ENCODE measurements at regions of chr5 and their contacts with region 1.

Region 1: DNA sequence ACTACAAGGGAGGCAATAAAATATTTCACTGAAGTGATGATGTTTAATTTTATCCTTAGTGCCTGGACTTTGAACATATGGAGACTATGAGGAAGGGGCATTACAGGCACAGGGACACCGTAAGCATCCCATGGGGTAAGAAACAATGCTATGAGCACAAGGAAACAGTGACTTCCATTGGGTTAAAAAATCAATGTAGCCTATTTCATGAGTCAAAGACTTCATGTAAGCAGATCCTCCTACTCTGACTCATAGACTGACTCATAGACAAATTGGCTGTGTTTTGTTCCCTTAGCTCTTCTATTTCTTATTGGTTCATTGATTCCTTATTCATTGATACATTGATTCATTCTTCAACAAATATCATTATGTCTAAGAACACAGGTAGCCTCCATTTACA is 351.0 kb downstream of the PRELID2 start:
- DNase-seq: peak; percentile 92
- ATAC-seq: peak; percentile 74
- H3K4me3 ChIP-seq: no peak overlapping the region
- H3K27ac ChIP-seq: no peak overlapping the region
- H3K4me1 ChIP-seq: peaks cover 8% of the 10 kb centered on the region
- H3K27me3 ChIP-seq: no peaks in the 10 kb centered on the region
- CTCF ChIP-seq: no peak
- POLR2A ChIP-seq: no peak
- RAD21 ChIP-seq: no peak

Region 2: GRCh38 chr5:145362261-145362660 is 121.9 kb before region 1 on chr5:
- CTCF ChIA-PET with region 1: no interaction called
- POLR2A ChIA-PET with region 1: no interaction called
- dilution Hi-C with region 1: no loop called
- in situ Hi-C with region 1: no loop called
- intact Hi-C with region 1: loop called (anchors 5 kb)
- DNase-seq: peak; percentile 93
- ATAC-seq: peak; percentile 84
- H3K4me3 ChIP-seq: no peak overlapping the region
- H3K27ac ChIP-seq: peak overlapping the region; percentile 99
- H3K4me1 ChIP-seq: peaks cover 14% of the 10 kb centered on the region
- H3K27me3 ChIP-seq: no peaks in the 10 kb centered on the region
- CTCF ChIP-seq: no peak
- POLR2A ChIP-seq: no peak
- RAD21 ChIP-seq: no peak

Region 3: DNA sequence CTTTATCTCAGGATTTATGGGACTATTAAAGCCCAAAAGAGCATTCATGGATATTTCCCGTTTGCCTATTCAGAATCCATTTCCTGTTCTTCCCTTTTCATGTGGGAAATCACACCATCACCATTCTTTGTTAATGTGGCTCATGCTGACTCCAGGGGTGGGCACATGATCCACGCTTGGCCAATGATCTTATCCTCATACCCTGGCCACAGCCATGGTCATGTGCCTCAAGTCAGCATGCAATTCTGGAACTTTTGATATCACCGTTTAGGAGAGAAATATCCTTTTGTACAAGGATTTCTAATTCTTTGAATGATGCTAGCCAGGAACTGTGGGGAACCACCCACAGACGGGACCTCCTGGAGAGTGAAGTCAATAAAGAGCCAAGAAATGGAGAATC is 78.8 kb after region 1 on chr5:
- CTCF ChIA-PET with region 1: no interaction called
- POLR2A ChIA-PET with region 1: no interaction called
- dilution Hi-C with region 1: no loop called
- in situ Hi-C with region 1: no loop called
- intact Hi-C with region 1: no loop called
- DNase-seq: no peak
- ATAC-seq: no peak
- H3K4me3 ChIP-seq: no peak overlapping the region
- H3K27ac ChIP-seq: no peak overlapping the region
- H3K4me1 ChIP-seq: no peaks in the 10 kb centered on the region
- H3K27me3 ChIP-seq: no peaks in the 10 kb centered on the region
- CTCF ChIP-seq: no peak
- POLR2A ChIP-seq: no peak
- RAD21 ChIP-seq: no peak

Region 4: GRCh38 chr5:145587710-145588109 is 103.6 kb after region 1 on chr5:
- CTCF ChIA-PET with region 1: no interaction called
- POLR2A ChIA-PET with region 1: no interaction called
- dilution Hi-C with region 1: no loop called
- in situ Hi-C with region 1: no loop called
- intact Hi-C with region 1: loop called (anchors 5 kb)
- DNase-seq: peak; percentile 93
- ATAC-seq: peak; percentile 92
- H3K4me3 ChIP-seq: no peak overlapping the region
- H3K27ac ChIP-seq: peak overlapping the region; percentile 21; the same call in 1 of the 2 replicates
- H3K4me1 ChIP-seq: peaks cover 6% of the 10 kb centered on the region
- H3K27me3 ChIP-seq: no peaks in the 10 kb centered on the region
- CTCF ChIP-seq: no peak
- POLR2A ChIP-seq: no peak
- RAD21 ChIP-seq: no peak

Measured in IMR-90 (cell line).